ENCODE measurements at regions of chr5 and their contacts with region 1.

Region 1: GRCh38 chr5:134527146-134527960 is 1.9 kb downstream of the JADE2 start:
- DNase-seq: peak; percentile 41 to 85 (median 70)
- ATAC-seq: peak; percentile 34
- H3K4me3 ChIP-seq: peak overlapping the region; percentile 82 to 87
- H3K4me3 Mint-ChIP-seq: peak overlapping the region; percentile 96
- H3K27ac ChIP-seq: peak overlapping the region; percentile 98
- H3K27ac Mint-ChIP-seq: peak overlapping the region; percentile 94
- H3K4me1 ChIP-seq: peaks cover 57% of the 10 kb centered on the region
- H3K4me1 Mint-ChIP-seq: peaks cover 58% of the 10 kb centered on the region
- H3K27me3 ChIP-seq: no peaks in the 10 kb centered on the region
- H3K27me3 Mint-ChIP-seq: no peaks in the 10 kb centered on the region
- CTCF ChIP-seq: peak; percentile 79

Region 2: DNA sequence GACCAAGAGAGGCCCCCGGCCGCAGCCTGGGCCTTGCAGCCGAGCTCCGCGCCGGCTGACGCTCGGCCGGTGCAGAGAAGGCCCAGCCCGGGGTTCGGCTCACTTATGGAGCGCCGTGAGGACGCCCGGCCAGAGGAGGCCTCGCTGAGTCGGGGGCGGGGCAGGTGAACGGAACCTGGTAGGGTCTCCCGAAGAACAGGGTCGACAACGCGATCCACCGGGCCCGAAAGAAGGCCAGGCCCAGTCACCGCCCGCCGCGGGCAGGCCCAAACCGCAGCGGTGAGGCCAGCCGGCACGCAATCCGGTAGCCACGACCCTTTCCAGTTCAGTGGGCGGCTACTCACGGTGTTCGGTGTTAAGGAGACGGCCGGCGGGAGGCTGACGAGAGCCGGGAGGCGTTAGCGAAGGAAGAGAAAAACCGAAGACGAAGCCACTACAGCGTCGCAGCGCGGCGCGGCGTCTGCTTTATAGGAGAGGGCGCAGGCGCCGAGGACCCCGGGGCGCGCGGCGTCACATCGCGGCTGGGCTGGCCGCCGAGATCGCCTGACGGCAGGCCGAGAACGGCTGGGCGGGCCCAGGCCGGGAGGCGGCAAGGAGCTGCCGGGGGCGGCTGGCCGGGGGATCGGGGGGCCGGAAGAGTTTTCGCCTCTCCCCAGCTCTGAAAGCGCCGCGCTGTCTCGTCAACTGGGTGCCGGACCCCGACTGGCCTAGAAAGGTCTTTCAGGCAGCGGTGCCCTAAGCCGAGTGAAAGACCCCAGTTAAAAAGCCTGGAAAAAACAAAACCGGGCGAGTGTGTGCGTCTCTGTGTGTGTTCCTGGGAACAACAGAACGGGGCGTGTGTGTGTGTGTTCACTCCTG is 350.6 kb before region 1 on chr5 and contains the start of gene SKP1:
- CTCF ChIA-PET with region 1: no interaction called
- POLR2A ChIA-PET with region 1: interaction called, 3 read pairs
- intact Hi-C with region 1: loop called (anchors 2 to 5 kb)
- DNase-seq: peak; percentile 79 to 93 (median 85)
- ATAC-seq: peak; percentile 88
- H3K4me3 ChIP-seq: peak within 1 kb of the TSS; percentile 98 to 99
- H3K4me3 Mint-ChIP-seq: peak within 1 kb of the TSS; percentile 98
- H3K27ac ChIP-seq: peak within 1 kb of the TSS; percentile 98
- H3K27ac Mint-ChIP-seq: peak within 1 kb of the TSS; percentile 99
- H3K4me1 ChIP-seq: peaks cover 31% of the 10 kb centered on the region
- H3K4me1 Mint-ChIP-seq: peaks cover 34% of the 10 kb centered on the region
- H3K27me3 ChIP-seq: no peaks in the 10 kb centered on the region
- H3K27me3 Mint-ChIP-seq: no peaks in the 10 kb centered on the region
- CTCF ChIP-seq: no peak
- total RNA-seq, gene SKP1: 290 to 301 TPM

Region 3: DNA sequence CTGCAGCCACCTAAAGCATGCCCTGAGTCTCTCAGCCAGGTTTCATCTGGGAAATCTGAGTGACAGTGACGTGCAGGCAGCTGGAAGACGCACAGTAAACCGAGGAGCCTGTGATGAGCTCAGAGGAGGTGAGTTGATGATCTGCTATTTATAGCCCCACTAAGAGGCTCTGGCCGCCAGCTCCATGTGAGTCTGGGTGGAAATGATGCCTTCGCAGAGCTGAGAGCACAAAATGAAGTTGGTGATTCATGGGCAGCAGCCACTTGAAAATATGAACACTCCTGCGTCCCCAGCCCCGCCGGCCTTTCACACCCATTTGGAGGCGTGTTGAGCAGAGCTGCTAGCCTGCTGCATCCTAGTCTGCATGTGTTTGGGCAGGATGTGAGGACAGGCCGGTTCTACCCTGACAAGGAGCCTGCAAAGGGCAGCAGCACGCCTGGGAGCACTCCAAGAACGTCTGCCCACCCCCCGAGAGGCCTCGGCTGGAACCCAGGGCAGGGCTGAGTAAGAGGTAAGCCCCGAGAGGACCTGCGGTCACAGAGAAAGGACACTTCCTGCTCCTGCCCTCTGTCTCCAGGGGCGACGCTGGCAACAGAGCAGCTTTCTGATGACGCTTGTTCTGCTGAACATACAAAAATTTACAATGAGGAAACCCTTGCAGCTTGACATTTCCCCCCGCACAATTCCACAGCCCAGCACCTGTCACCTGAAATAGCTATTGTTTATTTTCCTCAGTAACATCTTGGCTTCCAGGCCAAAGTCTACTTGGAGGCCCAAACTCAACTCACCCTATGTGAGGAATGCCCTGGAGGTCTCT is 90.6 kb before region 1 on chr5:
- CTCF ChIA-PET with region 1: no interaction called
- POLR2A ChIA-PET with region 1: interaction called, 10 read pairs
- intact Hi-C with region 1: no loop called
- DNase-seq: peak; percentile 12 to 78 (median 57)
- ATAC-seq: peak; percentile 74
- H3K4me3 ChIP-seq: no peak overlapping the region
- H3K4me3 Mint-ChIP-seq: peak overlapping the region; percentile 9
- H3K27ac ChIP-seq: peak overlapping the region; percentile 18 to 30
- H3K27ac Mint-ChIP-seq: peak overlapping the region; percentile 80
- H3K4me1 ChIP-seq: peaks cover 12% of the 10 kb centered on the region
- H3K4me1 Mint-ChIP-seq: peaks cover 16% of the 10 kb centered on the region
- H3K27me3 ChIP-seq: no peaks in the 10 kb centered on the region
- H3K27me3 Mint-ChIP-seq: peaks cover 2% of the 10 kb centered on the region
- CTCF ChIP-seq: no peak

Region 4: DNA sequence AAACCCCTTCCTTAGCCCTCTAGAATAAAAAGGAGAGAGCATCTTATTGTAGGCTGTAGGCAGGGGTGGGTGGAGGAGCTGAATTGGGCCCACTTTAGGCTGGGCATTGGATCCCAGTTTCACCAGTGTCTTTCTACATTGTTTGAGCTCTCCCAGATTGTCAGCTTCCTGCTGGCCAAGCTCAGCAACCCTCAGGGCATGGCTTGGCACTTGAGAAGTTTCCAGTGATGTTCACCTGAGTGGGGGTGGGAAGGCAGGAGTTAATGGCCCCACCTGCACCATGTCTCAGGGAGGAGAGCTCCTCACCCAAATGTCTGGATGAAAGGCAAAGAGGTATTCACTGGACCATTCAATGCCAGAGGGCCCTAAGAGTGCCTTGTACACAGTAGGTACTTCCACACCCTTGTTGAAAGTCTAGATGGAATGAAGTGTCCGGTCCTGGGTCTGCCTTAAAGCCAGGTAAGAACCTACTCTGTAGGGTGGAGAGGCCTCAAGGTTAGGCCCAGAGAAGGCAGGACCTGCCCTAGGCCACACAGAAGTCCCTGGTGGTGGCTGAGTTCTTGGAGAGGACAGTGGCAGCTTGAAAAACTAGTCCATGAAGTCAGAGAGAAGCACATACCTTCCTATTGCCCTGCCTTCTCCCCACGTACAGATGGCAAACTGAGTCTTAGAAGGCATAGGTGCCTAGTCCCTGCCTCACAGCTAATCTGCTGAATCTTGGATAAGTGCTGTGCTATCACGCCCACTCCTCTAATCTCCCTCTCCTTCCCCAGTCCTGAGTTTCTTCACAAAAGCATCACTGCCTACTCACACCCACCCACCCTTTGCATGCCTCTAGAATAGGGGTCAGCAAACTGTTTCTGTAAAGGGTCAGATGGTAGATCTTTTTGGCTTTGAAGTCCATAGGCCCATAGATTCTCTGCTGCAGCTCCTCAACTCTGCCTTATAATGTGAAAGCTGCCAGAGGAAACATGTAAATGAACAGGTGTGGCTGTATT is 25.4 kb before region 1 on chr5:
- CTCF ChIA-PET with region 1: interaction called, 3 read pairs
- POLR2A ChIA-PET with region 1: interaction called, 4 read pairs
- intact Hi-C with region 1: loop called in 1 of 2 experiments (anchors 1 kb)
- DNase-seq: no peak
- ATAC-seq: no peak
- H3K4me3 ChIP-seq: no peak overlapping the region
- H3K4me3 Mint-ChIP-seq: no peak overlapping the region
- H3K27ac ChIP-seq: no peak overlapping the region
- H3K27ac Mint-ChIP-seq: no peak overlapping the region
- H3K4me1 ChIP-seq: peaks cover 19% of the 10 kb centered on the region
- H3K4me1 Mint-ChIP-seq: peaks cover 17% of the 10 kb centered on the region
- H3K27me3 ChIP-seq: no peaks in the 10 kb centered on the region
- H3K27me3 Mint-ChIP-seq: no peaks in the 10 kb centered on the region
- CTCF ChIP-seq: no peak

Region 5: GRCh38 chr5:134637161-134637582 is 109.8 kb after region 1 on chr5:
- CTCF ChIA-PET with region 1: no interaction called
- POLR2A ChIA-PET with region 1: no interaction called
- intact Hi-C with region 1: loop called (anchors 2 to 5 kb)
- DNase-seq: no peak
- ATAC-seq: no peak
- H3K4me3 ChIP-seq: no peak overlapping the region
- H3K4me3 Mint-ChIP-seq: no peak overlapping the region
- H3K27ac ChIP-seq: no peak overlapping the region
- H3K27ac Mint-ChIP-seq: no peak overlapping the region
- H3K4me1 ChIP-seq: no peaks in the 10 kb centered on the region
- H3K4me1 Mint-ChIP-seq: peaks cover under 1% of the 10 kb centered on the region
- H3K27me3 ChIP-seq: no peaks in the 10 kb centered on the region
- H3K27me3 Mint-ChIP-seq: no peaks in the 10 kb centered on the region
- CTCF ChIP-seq: no peak